ENCODE measurements at regions of chr3 and their contacts with region 1.

Region 1: DNA sequence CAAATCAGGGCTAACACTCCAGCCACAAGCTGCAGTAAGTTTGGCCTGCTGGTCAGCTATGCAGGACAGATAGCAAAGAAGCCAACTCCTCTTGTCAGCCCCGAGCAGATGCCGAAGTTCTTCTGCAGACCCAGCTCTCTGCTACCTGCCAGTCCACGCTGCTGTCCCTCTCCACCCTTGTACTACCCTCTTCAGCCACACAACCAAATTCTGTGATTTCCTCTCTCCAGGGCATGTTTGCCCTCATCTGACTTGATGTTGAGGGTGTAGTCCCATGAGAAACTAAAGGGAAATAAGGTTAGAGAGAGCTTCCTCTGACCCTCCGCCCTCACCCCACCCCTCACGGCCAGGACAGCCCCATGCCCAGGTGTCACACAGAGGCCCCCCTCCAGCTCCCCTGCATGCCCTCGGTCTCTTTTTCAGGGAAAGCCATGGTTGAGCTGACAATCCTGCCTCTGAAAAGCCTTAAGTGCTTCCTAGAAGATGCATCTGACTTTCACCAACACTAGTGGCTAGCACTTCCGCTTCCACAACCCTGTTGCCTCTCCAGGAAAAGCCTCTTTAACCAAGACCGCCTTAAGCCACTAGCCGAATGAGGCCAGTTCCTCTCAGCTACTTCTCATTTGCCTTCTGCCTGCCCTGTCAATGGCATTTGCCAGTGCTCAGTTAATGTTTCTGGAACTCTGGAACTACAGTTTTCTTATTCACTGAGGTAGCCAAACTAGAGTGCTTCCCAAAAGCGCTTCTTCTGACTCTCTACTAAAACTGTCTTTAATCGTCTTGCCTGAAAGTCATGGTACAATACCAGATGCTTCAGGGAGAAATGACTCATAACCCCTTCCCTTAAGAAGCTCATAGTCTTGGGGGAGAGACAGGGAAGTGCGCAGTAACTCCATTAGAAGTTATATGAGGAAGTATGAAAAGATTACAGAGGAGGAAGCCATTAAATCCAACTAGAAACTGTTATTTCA is 300.4 kb upstream of the STT3B start:
- H3K4me3 Mint-ChIP-seq: peak overlapping the region; percentile 26
- H3K27ac Mint-ChIP-seq: peak overlapping the region; percentile 95
- H3K4me1 Mint-ChIP-seq: peaks cover 52% of the 10 kb centered on the region
- H3K27me3 Mint-ChIP-seq: no peaks in the 10 kb centered on the region

Region 2: DNA sequence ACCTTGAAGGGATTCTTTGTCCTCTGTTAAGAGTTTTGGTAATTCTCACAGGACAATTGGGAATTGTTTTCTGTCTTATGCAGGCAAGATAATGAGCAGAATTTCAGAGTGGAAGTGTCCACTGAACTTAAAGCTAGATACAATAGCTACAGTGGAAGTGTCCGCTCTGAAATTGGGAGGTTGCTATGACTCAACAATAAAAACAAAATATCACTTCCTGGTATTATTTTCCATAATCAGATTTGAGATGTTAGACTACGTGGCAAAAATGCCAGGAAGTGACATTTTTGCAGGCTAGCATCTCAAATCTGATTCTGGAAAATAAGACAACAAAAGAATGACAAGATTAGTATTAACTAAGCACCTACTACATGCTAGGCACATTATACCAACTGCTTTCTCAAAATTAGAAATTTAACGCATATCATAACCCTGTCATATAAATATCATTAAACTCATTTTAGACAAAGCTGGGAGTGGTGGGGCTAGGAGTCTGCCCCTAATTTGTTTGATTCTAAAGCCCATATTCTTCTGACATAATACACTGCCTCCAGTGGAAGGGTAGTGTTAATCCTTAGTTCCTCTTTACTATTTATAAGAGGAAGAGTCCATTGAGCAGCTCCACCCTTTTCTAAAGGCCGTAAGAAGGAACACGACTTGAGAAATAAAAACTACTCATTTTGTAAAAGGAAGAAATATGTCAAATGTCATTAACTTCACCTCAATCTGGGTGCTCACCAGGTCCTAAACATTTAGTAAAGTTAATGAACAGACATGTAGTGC is 33.5 kb after region 1 on chr3:
- intact Hi-C with region 1: loop called (anchors 5 kb)
- H3K4me3 Mint-ChIP-seq: no peak overlapping the region
- H3K27ac Mint-ChIP-seq: peak overlapping the region; percentile 74
- H3K4me1 Mint-ChIP-seq: peaks cover 32% of the 10 kb centered on the region
- H3K27me3 Mint-ChIP-seq: no peaks in the 10 kb centered on the region

Region 3: DNA sequence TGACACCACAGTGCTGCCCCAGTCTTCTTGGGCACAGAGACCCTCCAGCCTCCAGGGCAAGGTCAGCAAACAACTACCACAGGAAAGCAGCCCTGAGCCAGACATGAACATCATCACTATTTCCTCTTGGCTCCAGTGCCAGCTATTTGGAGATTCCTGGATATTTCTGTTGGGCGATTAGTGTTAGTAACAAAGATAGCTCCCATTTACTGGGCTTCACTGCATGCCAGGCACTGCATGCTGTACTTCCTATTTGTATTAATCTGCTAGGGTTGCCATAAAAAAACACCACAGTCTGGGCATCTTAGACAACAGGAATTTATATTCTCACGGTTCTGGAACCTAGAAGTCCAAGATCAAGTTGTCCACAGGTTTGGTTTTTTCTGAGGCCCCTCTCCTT is 45.2 kb after region 1 on chr3:
- intact Hi-C with region 1: no loop called
- H3K4me3 Mint-ChIP-seq: no peak overlapping the region
- H3K27ac Mint-ChIP-seq: no peak overlapping the region
- H3K4me1 Mint-ChIP-seq: no peaks in the 10 kb centered on the region
- H3K27me3 Mint-ChIP-seq: no peaks in the 10 kb centered on the region